Lower lobe of right lung (tissue), 2 donors: ENCODE measurements at regions of chr2 and their contacts with region 1.

Region 1: GRCh38 chr2:149020432-149020851 is 18.1 kb upstream of the LYPD6B start:
- DNase-seq: no peak
- ATAC-seq: peak; percentile 63 to 89
- H3K4me3 ChIP-seq: no peak overlapping the region
- H3K27ac ChIP-seq: no peak overlapping the region
- H3K4me1 ChIP-seq: peaks cover 18% of the 10 kb centered on the region
- H3K27me3 ChIP-seq: no peaks in the 10 kb centered on the region
- CTCF ChIP-seq: no peak

Region 2: GRCh38 chr2:148971547-148971946 is 48.9 kb before region 1 on chr2:
- intact Hi-C with region 1: no loop called
- DNase-seq: no peak
- ATAC-seq: no peak
- H3K4me3 ChIP-seq: no peak overlapping the region
- H3K27ac ChIP-seq: no peak overlapping the region
- H3K4me1 ChIP-seq: peaks cover 5% of the 10 kb centered on the region
- H3K27me3 ChIP-seq: no peaks in the 10 kb centered on the region
- CTCF ChIP-seq: no peak

Region 3: GRCh38 chr2:149145314-149146295 is 125.2 kb after region 1 on chr2:
- intact Hi-C with region 1: no loop called
- DNase-seq: no peak
- ATAC-seq: no peak
- H3K4me3 ChIP-seq: no peak overlapping the region
- H3K27ac ChIP-seq: no peak overlapping the region
- H3K4me1 ChIP-seq: no peaks in the 10 kb centered on the region
- H3K27me3 ChIP-seq: no peaks in the 10 kb centered on the region
- CTCF ChIP-seq: no peak

Region 4: GRCh38 chr2:149561309-149561926 is 541.0 kb after region 1 on chr2:
- intact Hi-C with region 1: loop called (anchors 5 kb)
- DNase-seq: no peak
- ATAC-seq: peak in 1 of 2 donors; percentile 42
- H3K4me3 ChIP-seq: no peak overlapping the region
- H3K27ac ChIP-seq: no peak overlapping the region
- H3K4me1 ChIP-seq: peaks cover 9% of the 10 kb centered on the region
- H3K27me3 ChIP-seq: no peaks in the 10 kb centered on the region
- CTCF ChIP-seq: peak; percentile 88